BJ (cell line): ENCODE measurements at regions of chr20 and their contacts with region 1.

Region 1: DNA sequence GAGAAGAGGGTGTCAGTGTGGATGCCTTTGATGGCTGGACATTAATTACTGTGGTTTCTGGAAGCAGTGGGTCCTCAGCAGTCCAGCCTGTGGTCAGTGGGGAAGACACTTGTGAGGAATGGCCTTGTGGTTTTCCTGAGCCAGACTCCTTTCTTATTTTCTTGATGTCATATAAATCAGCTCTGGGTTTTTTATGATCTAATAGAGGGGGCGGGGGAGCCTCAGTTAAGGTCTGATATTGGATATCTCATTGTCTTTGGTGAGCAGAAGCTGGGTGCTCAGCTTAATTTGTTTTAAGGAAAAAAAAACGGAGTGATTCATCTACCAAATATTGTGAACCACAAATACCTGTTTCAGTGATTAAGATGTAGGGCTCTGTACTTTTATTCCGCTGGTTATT is 62.1 kb downstream of the OTOR start:
- DNase-seq: no peak
- H3K4me3 ChIP-seq: no peak overlapping the region
- H3K27me3 ChIP-seq: peaks cover 2% of the 10 kb centered on the region
- CTCF ChIP-seq: no peak

Region 2: DNA sequence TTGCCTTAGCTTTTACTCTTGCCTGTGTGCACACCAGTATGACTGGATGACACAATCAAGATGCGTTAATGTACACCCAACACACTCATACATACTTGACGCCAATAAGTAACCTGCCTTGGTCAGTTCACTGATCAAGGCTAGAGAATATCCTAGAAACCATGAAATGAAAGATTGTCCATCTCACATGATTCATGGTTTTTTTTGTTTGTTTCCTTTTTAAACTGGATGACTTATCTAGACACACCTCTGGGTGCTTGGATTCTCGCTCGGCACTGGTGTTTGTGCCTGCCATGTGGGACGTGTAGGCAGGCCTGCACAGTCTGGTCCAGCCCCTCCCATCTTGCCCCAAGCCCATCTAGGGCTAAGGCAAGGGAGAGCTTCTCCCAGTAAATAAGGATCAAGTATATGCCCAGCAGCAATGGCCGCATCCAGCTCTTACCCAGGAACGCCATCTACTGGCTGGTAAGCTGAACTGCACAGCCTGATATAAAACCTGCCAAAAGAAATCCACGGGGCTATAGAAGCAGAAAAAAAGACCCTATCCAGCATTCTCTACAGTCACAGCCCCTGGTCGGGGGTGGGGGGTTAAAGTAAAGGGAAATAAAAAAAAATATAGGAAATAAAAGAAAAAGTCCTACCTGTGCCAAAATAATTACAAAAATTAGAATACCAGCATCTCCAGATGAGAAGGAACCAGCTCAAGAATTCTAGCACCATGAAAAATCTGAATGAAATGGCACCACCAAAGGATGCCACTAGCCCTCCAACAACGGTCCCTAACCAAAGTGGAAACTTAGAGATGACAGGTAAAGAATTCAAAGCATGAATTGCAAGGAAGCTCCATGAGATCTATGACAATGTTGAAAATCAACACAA is 11.2 kb after region 1 on chr20:
- CTCF ChIA-PET with region 1: interaction called, 51 read pairs
- POLR2A ChIA-PET with region 1: no interaction called
- DNase-seq: no peak
- H3K4me3 ChIP-seq: no peak overlapping the region
- H3K27me3 ChIP-seq: no peaks in the 10 kb centered on the region
- CTCF ChIP-seq: peak; percentile 95